ENCODE measurements at regions of chr14 and their contacts with region 1.

Region 1: DNA sequence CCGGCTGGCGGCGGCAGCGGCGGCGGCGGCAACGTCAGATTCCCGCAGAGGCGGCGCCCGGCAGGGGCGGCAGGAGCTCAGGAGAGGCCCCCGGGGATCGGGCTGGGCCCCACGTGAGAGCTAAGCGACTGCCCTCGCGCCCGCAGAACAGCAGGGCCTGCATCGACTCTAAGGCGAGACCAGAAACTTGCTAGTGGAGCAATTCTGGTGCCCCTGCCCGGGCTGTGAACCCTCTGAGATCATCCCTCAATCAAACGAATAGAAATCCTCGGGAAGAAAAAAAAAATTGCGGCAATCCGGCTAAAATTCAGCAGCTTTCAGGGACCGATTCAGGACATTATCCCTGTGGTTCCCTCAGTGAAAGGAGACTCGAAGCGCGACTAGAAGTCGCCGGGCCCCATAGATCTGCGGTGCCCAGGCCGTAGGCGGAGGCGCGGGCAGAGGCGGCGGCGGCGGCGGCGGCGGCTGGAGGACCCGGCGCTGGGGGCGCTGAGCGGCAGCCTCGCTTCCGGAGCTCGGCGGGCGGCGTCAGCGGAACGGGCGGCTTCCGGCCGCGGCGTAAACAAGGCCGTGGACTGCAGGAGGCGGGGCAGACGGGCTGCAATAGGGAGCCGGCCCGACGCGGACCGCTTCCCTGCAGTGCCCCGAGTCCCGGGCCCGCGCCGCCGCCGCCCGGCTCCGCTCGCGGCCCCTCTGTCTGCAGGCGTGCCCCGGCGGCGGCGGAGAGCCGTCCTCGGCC is at the start of gene KLHDC2:
- DNase-seq: peak in 1 of 2 donors; percentile 88
- H3K4me3 ChIP-seq: peak within 1 kb of the TSS; percentile 88 to 99
- H3K27ac ChIP-seq: peak within 1 kb of the TSS; percentile 98
- H3K4me1 ChIP-seq: peaks cover 39% of the 10 kb centered on the region
- H3K27me3 ChIP-seq: no peaks in the 10 kb centered on the region
- CTCF ChIP-seq: no peak
- POLR2A ChIP-seq: peak in 1 of 2 donors; percentile 90
- total RNA-seq, gene KLHDC2: 77.8 TPM

Region 2: DNA sequence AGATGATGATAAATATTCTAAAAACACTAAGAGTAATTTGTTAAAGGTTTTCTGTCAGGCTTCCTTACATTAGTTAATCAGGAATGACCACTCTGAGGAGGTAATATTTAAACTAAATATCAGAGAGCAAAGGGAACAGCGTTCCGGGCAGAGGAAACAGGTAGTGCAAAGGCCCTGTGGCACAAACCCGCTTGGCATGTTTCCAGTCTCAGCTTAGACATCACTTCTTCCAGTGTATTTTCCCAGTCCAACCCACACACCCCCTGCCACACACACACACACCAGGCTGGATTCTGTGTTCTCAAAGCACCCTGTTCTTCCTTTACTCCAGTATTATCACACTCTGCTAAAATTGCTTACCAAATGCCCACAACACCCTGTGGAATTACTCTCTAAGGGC is 428.6 kb before region 1 on chr14:
- intact Hi-C with region 1: no loop called
- DNase-seq: no peak
- H3K4me3 ChIP-seq: no peak overlapping the region
- H3K27ac ChIP-seq: no peak overlapping the region
- H3K4me1 ChIP-seq: no peaks in the 10 kb centered on the region
- H3K27me3 ChIP-seq: no peaks in the 10 kb centered on the region
- CTCF ChIP-seq: no peak
- POLR2A ChIP-seq: no peak

Region 3: DNA sequence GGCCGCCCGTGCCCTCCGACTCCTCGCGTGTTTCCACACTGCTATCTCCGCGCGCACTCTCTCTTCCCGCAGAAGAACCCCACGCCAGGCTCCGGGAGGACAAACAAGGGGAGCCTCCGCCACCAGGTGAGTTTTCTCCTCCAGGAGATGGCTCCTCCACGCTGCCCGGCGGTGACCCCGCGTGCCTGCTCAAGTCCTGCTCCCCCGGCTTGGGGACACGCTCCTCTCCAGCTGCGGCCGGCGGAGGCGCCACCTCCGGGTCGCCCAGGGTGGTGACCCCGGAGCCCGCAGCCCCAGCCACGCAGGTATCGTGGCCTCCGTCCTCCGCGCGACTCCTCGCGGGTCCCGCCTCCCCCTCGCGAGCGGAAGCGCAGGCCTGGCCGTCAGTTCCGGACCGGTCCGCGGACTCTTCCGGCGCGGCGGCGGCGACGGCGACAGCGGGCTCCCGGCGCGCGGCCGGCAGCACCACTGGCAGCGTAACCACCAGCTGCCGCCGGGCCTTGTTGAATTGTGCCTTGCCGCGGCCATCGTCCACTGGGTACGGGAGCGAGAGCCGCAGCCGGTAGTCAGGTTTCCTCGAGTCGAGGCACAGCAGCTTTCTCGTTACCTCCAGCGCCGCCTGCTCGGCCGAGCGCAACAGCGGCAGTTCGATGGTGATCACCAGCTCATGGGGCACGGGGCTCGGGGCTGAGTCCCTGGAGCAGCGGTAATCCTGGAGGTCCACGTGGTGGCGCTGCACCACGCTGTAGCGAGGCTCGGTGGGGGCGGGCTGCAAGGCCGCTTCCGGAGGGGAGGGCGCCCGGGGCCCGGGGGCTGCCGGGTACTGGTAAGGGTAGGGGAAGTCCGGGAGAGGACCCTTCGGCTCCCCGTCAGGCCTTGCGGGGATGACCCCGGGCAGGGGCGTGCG is 133.8 kb before region 1 on chr14:
- intact Hi-C with region 1: loop called (anchors 5 kb)
- DNase-seq: peak in 1 of 2 donors; percentile 97
- H3K4me3 ChIP-seq: peak overlapping the region; percentile 69 to 97
- H3K27ac ChIP-seq: peak overlapping the region; percentile 97
- H3K4me1 ChIP-seq: peaks cover 51% of the 10 kb centered on the region
- H3K27me3 ChIP-seq: no peaks in the 10 kb centered on the region
- CTCF ChIP-seq: peak; percentile 66 to 91 (median 73)
- POLR2A ChIP-seq: peak in 1 of 2 donors; percentile 49

Region 4: GRCh38 chr14:49786315-49787110 is 18.8 kb after region 1 on chr14:
- intact Hi-C with region 1: no loop called
- DNase-seq: no peak
- H3K4me3 ChIP-seq: no peak overlapping the region
- H3K27ac ChIP-seq: no peak overlapping the region
- H3K4me1 ChIP-seq: no peaks in the 10 kb centered on the region
- H3K27me3 ChIP-seq: no peaks in the 10 kb centered on the region
- CTCF ChIP-seq: no peak
- POLR2A ChIP-seq: no peak

Measured in vagina (tissue), 2 donors.